Breast epithelium (tissue), 4 donors: ENCODE measurements at regions of chr4 and their contacts with region 1.

Region 1: DNA sequence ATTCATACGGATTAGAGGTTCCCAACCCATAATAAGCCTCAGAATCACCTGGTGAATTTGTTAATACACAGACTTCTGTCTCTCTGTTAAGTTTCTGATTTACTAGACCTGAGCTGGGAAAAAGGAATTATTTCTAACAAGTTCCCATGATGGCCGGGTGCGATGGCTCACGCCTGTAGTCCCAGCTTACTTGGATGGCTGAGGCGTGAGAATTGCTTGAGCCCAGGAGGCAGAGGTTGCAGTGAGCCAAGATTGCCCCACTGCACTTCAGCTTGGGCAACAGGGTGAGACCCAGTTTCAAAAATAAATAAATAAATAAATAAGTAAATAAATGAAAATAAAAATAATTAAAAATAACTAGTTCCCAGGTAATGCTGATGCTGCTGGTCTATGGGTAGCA is 412.3 kb downstream of the GALNTL6 start:
- DNase-seq: no peak
- H3K4me3 ChIP-seq: no peak overlapping the region
- H3K27ac ChIP-seq: no peak overlapping the region
- H3K4me1 ChIP-seq: no peaks in the 10 kb centered on the region
- H3K27me3 ChIP-seq: no peaks in the 10 kb centered on the region
- CTCF ChIP-seq: no peak
- POLR2A ChIP-seq: no peak

Region 2: DNA sequence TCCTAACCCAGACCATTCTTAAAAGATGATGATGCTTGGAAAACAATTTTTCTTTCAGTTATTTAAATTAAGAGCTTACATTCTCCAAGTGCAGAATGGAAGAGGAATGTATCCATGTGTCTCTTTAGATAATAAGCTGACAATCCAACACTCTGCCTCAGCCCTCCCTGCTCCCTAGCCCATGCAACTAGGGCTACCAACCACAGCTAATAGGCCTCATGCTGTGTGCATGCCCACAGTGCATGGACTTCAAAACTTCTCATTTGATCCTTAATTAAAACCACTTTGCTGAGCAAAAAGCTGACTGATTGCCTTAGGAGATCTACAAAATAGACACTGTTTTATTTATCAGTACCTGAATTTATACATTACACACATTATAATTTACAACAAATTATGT is 61.7 kb after region 1 on chr4:
- intact Hi-C with region 1: loop called (anchors 2 kb)
- DNase-seq: no peak
- H3K4me3 ChIP-seq: no peak overlapping the region
- H3K27ac ChIP-seq: no peak overlapping the region
- H3K4me1 ChIP-seq: no peaks in the 10 kb centered on the region
- H3K27me3 ChIP-seq: no peaks in the 10 kb centered on the region
- CTCF ChIP-seq: no peak
- POLR2A ChIP-seq: no peak